Natural killer cell (primary cell): ENCODE measurements at regions of chr19 and their contacts with region 1.

Region 1: DNA sequence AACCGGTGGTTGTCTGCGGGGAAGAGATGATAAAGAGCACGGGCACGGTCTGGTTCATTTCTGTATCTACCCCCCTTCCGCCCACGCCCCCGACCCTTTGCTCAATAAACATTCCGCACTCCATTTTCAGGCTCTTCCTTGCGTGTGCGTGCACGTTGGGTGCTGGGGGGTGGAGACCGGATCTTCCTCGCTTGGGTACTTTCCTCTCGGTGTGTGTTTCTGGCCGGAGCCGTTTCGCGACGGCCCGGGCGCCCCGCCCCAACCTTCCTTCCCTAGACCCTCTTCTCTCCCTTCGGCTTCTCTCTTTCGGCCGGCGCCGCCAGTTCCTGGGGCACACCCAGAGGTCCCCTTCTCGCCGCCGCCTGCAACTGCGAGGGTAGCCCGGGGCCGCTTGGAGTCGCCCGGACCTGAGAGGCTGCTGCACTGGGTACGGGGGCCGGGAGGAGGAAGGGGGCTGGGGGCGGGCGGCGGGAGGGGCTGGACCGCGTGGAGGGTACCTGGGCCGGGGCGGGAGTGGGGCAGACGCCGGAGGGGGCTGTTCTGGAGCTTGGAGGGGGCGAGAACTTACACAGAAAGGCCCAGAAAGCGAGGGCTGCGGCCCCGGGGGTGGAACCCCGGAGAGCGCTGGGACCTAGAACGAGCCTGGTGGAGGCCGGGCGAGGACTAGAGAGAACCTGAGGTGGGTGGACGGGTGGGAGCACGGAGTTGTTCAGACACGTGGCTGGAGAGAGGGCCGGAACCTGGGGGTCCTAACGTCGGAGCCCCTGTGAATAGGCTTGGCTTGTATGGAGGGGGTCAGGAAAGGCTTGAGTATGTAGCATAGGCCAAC is at the start of gene ZNF581:
- DNase-seq: peak; percentile 73 to 92
- ATAC-seq: peak; percentile 65 to 81 (median 66)
- H3K4me3 ChIP-seq: peak within 1 kb of the TSS; percentile 63
- H3K4me3 Mint-ChIP-seq: peak within 1 kb of the TSS; percentile 96
- H3K27ac ChIP-seq: peak within 1 kb of the TSS; percentile 68
- H3K27ac Mint-ChIP-seq: peak within 1 kb of the TSS; percentile 80 to 96
- H3K4me1 ChIP-seq: peaks cover 68% of the 10 kb centered on the region
- H3K4me1 Mint-ChIP-seq: peaks cover 33 to 52% of the 10 kb centered on the region in 2 donors
- H3K27me3 ChIP-seq: no peaks in the 10 kb centered on the region
- H3K27me3 Mint-ChIP-seq: no peaks in the 10 kb centered on the region
- CTCF ChIP-seq: no peak
- total RNA-seq, gene ZNF581: 15.4 to 21.9 (median 19.0) TPM

Region 2: DNA sequence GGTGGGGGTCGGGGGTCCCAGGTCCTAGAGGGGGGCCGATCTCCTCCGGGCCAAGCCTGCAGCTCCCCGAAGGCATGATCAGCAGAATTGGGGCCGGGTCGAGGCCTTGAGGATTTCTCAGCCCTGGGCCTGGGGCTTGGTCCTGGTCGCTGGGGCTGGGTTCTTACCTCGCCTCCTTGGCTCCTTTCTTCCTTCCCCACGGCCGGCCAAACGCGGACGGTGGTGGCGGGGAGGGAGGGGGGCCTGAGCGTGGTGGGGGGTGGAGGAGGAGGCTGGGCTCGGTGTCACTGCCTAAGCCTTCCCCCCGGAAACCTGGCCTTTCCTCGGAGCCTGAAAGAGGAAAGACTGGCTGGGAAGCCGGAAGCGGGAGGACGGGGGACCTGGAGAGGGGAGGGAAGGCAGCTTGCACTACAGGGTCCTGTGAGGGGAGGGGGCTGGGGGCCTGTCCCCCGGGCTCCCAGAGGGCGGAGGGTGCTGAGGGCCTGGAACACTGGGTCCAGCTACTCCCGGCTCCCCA is 62.9 kb before region 1 on chr19 and contains the start of gene ZNF579:
- intact Hi-C with region 1: loop called (anchors 2 kb)
- DNase-seq: peak; percentile 71 to 85
- ATAC-seq: peak; percentile 78 to 84 (median 79)
- H3K4me3 ChIP-seq: peak within 1 kb of the TSS; percentile 68
- H3K4me3 Mint-ChIP-seq: peak within 1 kb of the TSS; percentile 83
- H3K27ac ChIP-seq: peak within 1 kb of the TSS; percentile 78
- H3K27ac Mint-ChIP-seq: peak within 1 kb of the TSS; percentile 43 to 82
- H3K4me1 ChIP-seq: peaks cover 20% of the 10 kb centered on the region
- H3K4me1 Mint-ChIP-seq: peaks cover 25 to 27% of the 10 kb centered on the region in 2 donors
- H3K27me3 ChIP-seq: no peaks in the 10 kb centered on the region
- H3K27me3 Mint-ChIP-seq: peaks cover 9 to 15% of the 10 kb centered on the region in 2 donors
- CTCF ChIP-seq: no peak
- total RNA-seq, gene ZNF579: 8.3 to 11.2 (median 9.5) TPM

Region 3: GRCh38 chr19:55605207-55605636 is 38.3 kb before region 1 on chr19:
- intact Hi-C with region 1: loop called (anchors 5 kb)
- DNase-seq: peak; percentile 93 to 99
- ATAC-seq: peak; percentile 77 to 88 (median 81)
- H3K4me3 ChIP-seq: peak overlapping the region; percentile 52
- H3K4me3 Mint-ChIP-seq: peak overlapping the region; percentile 88
- H3K27ac ChIP-seq: peak overlapping the region; percentile 71
- H3K27ac Mint-ChIP-seq: peak overlapping the region; percentile 93 to 95
- H3K4me1 ChIP-seq: peaks cover 36% of the 10 kb centered on the region
- H3K4me1 Mint-ChIP-seq: peaks cover 56 to 70% of the 10 kb centered on the region in 2 donors
- H3K27me3 ChIP-seq: no peaks in the 10 kb centered on the region
- H3K27me3 Mint-ChIP-seq: no peaks in the 10 kb centered on the region
- CTCF ChIP-seq: no peak

Region 4: GRCh38 chr19:55674841-55675660 is 31.5 kb after region 1 on chr19 and contains the start of gene EPN1:
- intact Hi-C with region 1: no loop called
- DNase-seq: peak; percentile 90 to 99
- ATAC-seq: peak; percentile 90 to 96 (median 92)
- H3K4me3 ChIP-seq: peak within 1 kb of the TSS; percentile 85
- H3K4me3 Mint-ChIP-seq: peak within 1 kb of the TSS; percentile 93
- H3K27ac ChIP-seq: peak within 1 kb of the TSS; percentile 93
- H3K27ac Mint-ChIP-seq: peak within 1 kb of the TSS; percentile 88 to 99
- H3K4me1 ChIP-seq: peaks cover 58% of the 10 kb centered on the region
- H3K4me1 Mint-ChIP-seq: peaks cover 57 to 63% of the 10 kb centered on the region in 2 donors
- H3K27me3 ChIP-seq: no peaks in the 10 kb centered on the region
- H3K27me3 Mint-ChIP-seq: no peaks in the 10 kb centered on the region
- CTCF ChIP-seq: no peak
- total RNA-seq, gene EPN1: 47.6 to 56.4 (median 51.8) TPM

Region 5: GRCh38 chr19:55723491-55723890 is 79.9 kb after region 1 on chr19:
- intact Hi-C with region 1: no loop called
- DNase-seq: no peak
- ATAC-seq: no peak
- H3K4me3 ChIP-seq: no peak overlapping the region
- H3K4me3 Mint-ChIP-seq: no peak overlapping the region
- H3K27ac ChIP-seq: no peak overlapping the region
- H3K27ac Mint-ChIP-seq: no peak overlapping the region
- H3K4me1 ChIP-seq: no peaks in the 10 kb centered on the region
- H3K4me1 Mint-ChIP-seq: no peaks in the 10 kb centered on the region
- H3K27me3 ChIP-seq: peaks cover 4% of the 10 kb centered on the region
- H3K27me3 Mint-ChIP-seq: peaks cover 15 to 51% of the 10 kb centered on the region in 2 donors
- CTCF ChIP-seq: no peak